GM18951 (cell line): ENCODE measurements at regions of chr4 and their contacts with region 1.

Region 1: GRCh38 chr4:10192331-10192730 is 75.7 kb upstream of the WDR1 start:
- POLR2A ChIP-seq: no peak

Region 2: DNA sequence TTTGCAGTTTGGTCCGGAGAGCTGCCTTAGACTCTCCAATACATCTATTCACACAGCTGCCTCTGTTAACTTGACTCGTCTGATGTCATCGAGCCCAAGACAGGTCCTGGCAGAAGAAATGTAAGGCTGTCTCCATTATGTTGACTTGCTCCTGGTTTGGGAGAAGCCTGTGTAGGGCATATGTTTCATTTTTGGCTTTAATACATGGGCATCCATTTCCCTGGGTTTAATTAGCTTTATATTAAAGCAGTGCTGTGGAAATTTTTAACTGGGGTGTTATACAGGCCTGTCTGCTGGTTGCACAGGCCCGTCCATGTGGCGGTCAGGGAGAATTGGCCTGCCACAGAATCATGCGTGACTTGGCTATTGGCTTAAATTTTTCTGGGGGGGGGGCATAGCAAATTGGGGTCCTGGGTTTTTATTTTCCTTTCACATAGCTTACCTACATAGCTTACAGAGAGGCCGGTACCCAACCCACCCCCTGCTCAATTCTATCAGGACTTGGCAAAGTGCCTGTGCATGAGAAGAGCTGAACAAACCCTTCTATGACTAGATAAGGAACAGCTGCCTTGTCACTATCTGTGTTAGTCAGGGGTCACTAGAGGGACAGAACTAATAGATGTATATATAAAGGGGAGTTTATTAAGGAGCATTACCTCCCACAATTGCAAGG is 47.8 kb after region 1 on chr4:
- in situ Hi-C with region 1: loop called (anchors 10 kb)
- POLR2A ChIP-seq: no peak